ENCODE measurements at regions of chr21 and their contacts with region 1.

Region 1: DNA sequence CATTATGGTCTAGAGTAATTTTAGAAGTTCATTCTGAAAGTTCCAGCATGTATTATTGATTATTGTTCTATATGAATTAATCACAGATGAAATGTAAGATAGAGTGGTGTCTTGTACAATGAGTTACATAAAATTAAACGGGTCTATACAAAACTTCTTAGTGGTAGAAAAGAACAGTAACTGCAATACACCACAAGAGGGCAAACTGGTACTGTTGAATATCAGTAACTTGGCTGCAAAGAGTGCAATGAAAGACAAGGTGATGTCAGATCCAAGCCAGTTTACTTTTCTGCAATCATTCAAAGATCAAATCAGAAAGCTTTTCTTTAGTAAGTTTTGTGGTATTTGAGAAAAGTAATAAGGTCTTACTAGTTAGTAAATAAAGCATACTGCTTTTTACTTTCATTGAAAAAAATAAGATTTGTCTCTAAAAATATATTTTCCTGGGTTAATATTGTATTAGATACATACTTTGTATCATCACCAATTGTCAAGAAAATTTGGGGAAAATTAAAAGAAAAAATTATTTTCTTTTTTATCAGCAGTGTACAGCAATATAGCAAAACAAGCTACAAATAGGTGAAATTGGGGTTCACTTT is 66.4 kb upstream of the BTG3 start:
- DNase-seq: peak; percentile 71
- ATAC-seq: peak; percentile 94
- H3K4me3 ChIP-seq: no peak overlapping the region
- H3K27ac ChIP-seq: no peak overlapping the region
- H3K4me1 ChIP-seq: no peaks in the 10 kb centered on the region
- H3K27me3 ChIP-seq: no peaks in the 10 kb centered on the region
- CTCF ChIP-seq: peak; percentile 90
- POLR2A ChIP-seq: no peak
- RAD21 ChIP-seq: peak; percentile 89

Region 2: GRCh38 chr21:17476006-17476405 is 203.1 kb before region 1 on chr21:
- CTCF ChIA-PET with region 1: no interaction called
- POLR2A ChIA-PET with region 1: no interaction called
- dilution Hi-C with region 1: no loop called
- in situ Hi-C with region 1: no loop called
- intact Hi-C with region 1: no loop called
- DNase-seq: no peak
- ATAC-seq: no peak
- H3K4me3 ChIP-seq: no peak overlapping the region
- H3K27ac ChIP-seq: no peak overlapping the region
- H3K4me1 ChIP-seq: no peaks in the 10 kb centered on the region
- H3K27me3 ChIP-seq: no peaks in the 10 kb centered on the region
- CTCF ChIP-seq: no peak
- POLR2A ChIP-seq: no peak
- RAD21 ChIP-seq: no peak

Region 3: DNA sequence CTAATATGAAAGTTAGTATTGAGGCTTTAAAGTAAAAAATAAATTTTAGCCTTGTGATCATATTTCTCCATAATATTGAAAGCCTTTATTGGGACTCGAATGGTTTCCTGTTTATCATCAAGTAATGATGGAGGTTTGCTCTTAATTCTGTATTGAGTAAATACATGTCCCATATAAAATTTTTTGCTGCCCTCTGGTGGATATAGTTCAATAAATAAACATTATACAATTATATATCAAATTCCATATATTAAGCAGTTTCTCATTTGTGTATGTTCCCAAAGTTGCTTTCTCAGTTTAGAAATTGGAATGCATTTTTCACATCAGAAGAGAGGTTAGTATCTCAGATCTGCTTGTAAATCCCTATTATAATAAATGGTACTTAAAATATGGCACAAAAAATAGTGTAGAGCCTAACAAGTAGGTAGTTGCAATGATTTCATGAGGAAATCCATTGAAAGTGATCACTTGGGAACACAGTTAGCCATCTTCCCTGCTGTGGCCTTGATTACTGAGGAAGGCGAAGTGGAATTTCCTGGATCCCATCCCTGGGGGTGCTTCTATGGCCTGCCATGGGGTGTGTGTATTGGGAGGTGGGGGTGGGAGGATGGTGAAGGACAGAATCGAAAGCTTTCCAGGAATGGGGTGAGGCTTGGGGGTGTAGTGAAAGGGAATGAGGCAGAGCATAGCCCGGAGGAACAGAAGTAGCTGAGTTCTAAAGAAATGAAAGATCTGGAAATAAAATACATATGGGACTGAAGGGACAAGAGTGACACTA is 224.1 kb after region 1 on chr21:
- CTCF ChIA-PET with region 1: interaction called, 4 read pairs
- POLR2A ChIA-PET with region 1: no interaction called
- dilution Hi-C with region 1: no loop called
- in situ Hi-C with region 1: loop called (anchors 5 kb)
- intact Hi-C with region 1: loop called (anchors 1 kb)
- DNase-seq: peak; percentile 49
- ATAC-seq: peak; percentile 54; the same call in 1 of the 2 replicates
- H3K4me3 ChIP-seq: no peak overlapping the region
- H3K27ac ChIP-seq: no peak overlapping the region
- H3K4me1 ChIP-seq: no peaks in the 10 kb centered on the region
- H3K27me3 ChIP-seq: peaks cover 6% of the 10 kb centered on the region; the same call in 1 of the 2 replicates
- CTCF ChIP-seq: peak; percentile 46
- POLR2A ChIP-seq: no peak
- RAD21 ChIP-seq: peak; percentile 47

Region 4: DNA sequence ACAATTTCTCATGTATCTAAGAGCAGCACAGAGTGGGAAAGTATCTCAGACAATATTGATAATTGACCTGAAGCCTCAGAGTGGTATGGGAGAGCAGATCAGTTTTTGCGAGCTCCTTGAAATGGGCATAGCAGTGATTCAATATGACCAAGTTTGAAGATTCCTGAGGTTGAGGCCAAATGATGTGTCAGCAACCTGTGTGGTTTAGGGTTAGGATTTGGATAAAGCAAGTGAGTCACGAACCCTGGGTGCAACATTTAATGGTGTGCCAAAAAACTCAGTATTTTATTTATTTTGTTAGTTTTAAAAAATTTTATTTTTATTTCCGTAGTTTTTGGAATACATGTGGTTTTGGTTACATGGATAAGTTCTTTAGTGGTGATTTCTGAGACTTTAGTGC is 232.5 kb after region 1 on chr21:
- CTCF ChIA-PET with region 1: no interaction called
- POLR2A ChIA-PET with region 1: no interaction called
- dilution Hi-C with region 1: loop called (anchors 10 kb)
- in situ Hi-C with region 1: no loop called
- intact Hi-C with region 1: no loop called
- DNase-seq: peak; percentile 42
- ATAC-seq: no peak; the same call in 1 of the 2 replicates
- H3K4me3 ChIP-seq: no peak overlapping the region
- H3K27ac ChIP-seq: no peak overlapping the region
- H3K4me1 ChIP-seq: no peaks in the 10 kb centered on the region
- H3K27me3 ChIP-seq: peaks cover 2% of the 10 kb centered on the region; the same call in 1 of the 2 replicates
- CTCF ChIP-seq: no peak
- POLR2A ChIP-seq: no peak
- RAD21 ChIP-seq: no peak

Region 5: DNA sequence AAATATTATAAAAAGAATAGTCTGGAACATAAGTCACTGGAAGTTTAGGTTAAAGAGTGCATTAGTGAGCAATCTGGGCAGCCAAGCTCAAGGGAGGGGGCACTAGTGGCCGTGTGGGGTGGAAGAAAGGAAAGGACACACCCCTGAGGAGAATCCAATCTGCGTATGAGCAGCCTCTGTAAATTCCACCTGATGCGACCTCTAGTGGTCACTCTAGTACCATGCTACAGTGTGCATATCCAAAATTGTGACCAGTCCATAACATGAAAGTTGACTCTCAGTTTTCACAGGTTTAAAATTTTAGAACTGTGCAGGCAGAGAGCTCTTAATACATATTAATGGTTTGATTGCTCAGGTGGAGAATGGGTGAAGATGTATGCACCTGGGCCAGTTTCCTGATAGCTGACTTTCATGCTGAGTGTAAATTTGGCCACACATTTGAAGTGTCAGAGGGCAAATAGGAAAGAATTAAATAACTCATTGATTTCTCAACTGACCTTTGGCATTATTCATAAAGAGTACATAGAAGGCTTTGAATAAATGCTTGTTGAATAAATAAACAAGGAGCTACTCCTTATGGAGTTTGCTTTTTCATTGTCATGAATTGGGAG is 246.0 kb after region 1 on chr21:
- CTCF ChIA-PET with region 1: interaction called, 6 read pairs
- POLR2A ChIA-PET with region 1: interaction called, 14 read pairs
- dilution Hi-C with region 1: no loop called
- in situ Hi-C with region 1: no loop called
- intact Hi-C with region 1: loop called (anchors 1 kb)
- DNase-seq: peak; percentile 54
- ATAC-seq: peak; percentile 88
- H3K4me3 ChIP-seq: no peak overlapping the region
- H3K27ac ChIP-seq: no peak overlapping the region
- H3K4me1 ChIP-seq: 0 out of 2 replicates have a peak, but pooled peaks cover 1% of the 10 kb centered on the region
- H3K27me3 ChIP-seq: no peaks in the 10 kb centered on the region; the same call in 1 of the 2 replicates
- CTCF ChIP-seq: peak; percentile 68
- POLR2A ChIP-seq: no peak
- RAD21 ChIP-seq: peak; percentile 56